Heart left ventricle (tissue), 16 donors: ENCODE measurements at regions of chr12 and their contacts with region 1.

Region 1: GRCh38 chr12:57135527-57136326 is 7.4 kb downstream of the LRP1 start:
- DNase-seq: peak; percentile 77 to 84 (median 82)
- ATAC-seq: peak; percentile 17 to 73 (median 58)
- H3K4me3 ChIP-seq: peak overlapping the region in 7 of 12 donors; percentile 1 to 41 (median 26)
- H3K27ac ChIP-seq: peak overlapping the region; percentile 63 to 100 (median 94)
- H3K4me1 ChIP-seq: peaks cover 17 to 99% (median 77%) of the 10 kb centered on the region in 12 donors
- H3K27me3 ChIP-seq: no peaks in the 10 kb centered on the region
- CTCF ChIP-seq: no peak
- POLR2A ChIP-seq: no peak

Region 2: DNA sequence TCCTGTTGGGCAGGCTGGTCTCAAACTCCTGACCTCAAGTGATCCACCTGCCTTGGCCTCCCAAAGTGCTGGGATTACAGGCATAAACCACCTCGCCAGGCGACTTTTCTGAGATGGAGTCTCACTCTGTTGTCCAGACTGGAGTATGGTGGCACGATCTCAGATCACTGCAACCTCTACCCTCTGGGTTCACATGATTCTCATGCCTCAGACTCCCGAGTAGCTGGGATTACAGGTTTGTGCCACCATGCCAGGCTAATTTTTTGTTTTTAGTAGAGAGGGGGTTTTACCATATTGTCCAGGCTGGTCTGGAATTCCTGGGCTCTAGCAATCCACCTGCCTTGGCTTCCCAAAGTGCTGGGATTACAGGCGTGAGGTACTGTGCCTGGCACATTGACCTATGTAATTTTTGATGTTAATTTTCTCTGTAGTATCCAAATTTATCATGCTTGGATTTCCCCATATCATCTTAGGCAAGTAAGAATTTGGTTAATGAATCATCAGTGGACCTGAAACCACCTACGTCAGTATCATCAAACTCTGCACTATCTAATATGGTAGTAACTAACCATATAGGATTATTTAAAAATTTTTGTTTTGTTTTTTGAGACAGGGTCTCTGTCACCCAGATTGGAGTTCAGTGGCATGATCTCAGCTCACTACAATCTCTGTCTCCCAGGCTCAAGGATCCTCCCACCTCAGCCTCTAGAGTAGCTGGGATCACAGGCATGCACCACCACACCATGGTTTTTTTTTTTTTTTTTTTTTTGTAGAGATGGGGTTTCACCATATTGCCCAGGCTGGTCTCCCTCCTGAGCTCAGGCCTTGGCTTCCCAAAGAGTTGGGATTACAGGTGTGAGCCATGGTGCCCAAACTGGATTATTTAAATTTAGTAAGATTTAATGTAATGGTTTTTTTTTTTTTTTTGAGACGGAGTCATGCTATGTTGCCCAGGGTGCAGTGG is 478.0 kb before region 1 on chr12:
- intact Hi-C with region 1: no loop called
- DNase-seq: no peak
- ATAC-seq: no peak
- H3K4me3 ChIP-seq: no peak overlapping the region
- H3K27ac ChIP-seq: no peak overlapping the region
- H3K4me1 ChIP-seq: no peaks in the 10 kb centered on the region
- H3K27me3 ChIP-seq: no peaks in the 10 kb centered on the region
- CTCF ChIP-seq: no peak
- POLR2A ChIP-seq: no peak

Region 3: GRCh38 chr12:56877195-56878009 is 258.3 kb before region 1 on chr12:
- intact Hi-C with region 1: no loop called
- DNase-seq: no peak
- ATAC-seq: no peak
- H3K4me3 ChIP-seq: no peak overlapping the region
- H3K27ac ChIP-seq: no peak overlapping the region
- H3K4me1 ChIP-seq: peaks cover 0 to 9% (median 0%) of the 10 kb centered on the region in 12 donors
- H3K27me3 ChIP-seq: no peaks in the 10 kb centered on the region
- CTCF ChIP-seq: no peak
- POLR2A ChIP-seq: no peak

Region 4: DNA sequence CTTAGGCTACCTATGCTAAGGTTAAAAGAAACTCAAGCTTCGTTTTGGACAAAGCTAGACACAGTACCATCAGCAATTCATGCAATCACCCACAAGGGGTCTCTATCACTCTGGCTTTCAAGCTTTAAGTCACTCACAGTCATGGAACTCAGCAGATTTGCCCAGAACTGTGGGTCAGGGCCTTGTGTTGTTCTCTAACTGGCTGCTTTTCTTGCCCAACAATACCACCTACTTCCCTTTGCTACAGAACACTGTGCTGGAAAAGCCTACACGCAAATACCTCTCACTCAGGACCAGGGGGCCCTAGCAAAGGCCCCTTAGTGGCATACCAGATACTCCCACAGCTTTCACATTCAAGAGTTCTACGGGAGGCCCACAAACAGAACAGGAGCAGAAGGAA is 66.2 kb before region 1 on chr12:
- intact Hi-C with region 1: no loop called
- DNase-seq: peak in 4 of 5 donors; percentile 44 to 69 (median 65)
- ATAC-seq: peak; percentile 86 to 98 (median 96)
- H3K4me3 ChIP-seq: no peak overlapping the region
- H3K27ac ChIP-seq: peak overlapping the region in 9 of 12 donors; percentile 5 to 81 (median 40)
- H3K4me1 ChIP-seq: peaks cover 0 to 19% (median 3%) of the 10 kb centered on the region in 12 donors
- H3K27me3 ChIP-seq: no peaks in the 10 kb centered on the region
- CTCF ChIP-seq: peak; percentile 77 to 92 (median 89)
- POLR2A ChIP-seq: no peak

Region 5: GRCh38 chr12:57148469-57149244 is 12.9 kb after region 1 on chr12:
- intact Hi-C with region 1: loop called in 2 of 10 experiments (anchors 2 kb)
- DNase-seq: peak; percentile 57 to 83 (median 75)
- ATAC-seq: peak; percentile 33 to 60 (median 48)
- H3K4me3 ChIP-seq: peak overlapping the region in 2 of 12 donors; percentile 12 to 16
- H3K27ac ChIP-seq: peak overlapping the region; percentile 75 to 95 (median 89)
- H3K4me1 ChIP-seq: peaks cover 14 to 97% (median 79%) of the 10 kb centered on the region in 12 donors
- H3K27me3 ChIP-seq: no peaks in the 10 kb centered on the region
- CTCF ChIP-seq: no peak
- POLR2A ChIP-seq: no peak